ENCODE measurements at regions of chr9 and their contacts with region 1.

Region 1: GRCh38 chr9:129333953-129334724 is 156.1 kb upstream of the IER5L start:
- DNase-seq: peak; percentile 97
- H3K4me3 ChIP-seq: peak overlapping the region; percentile 31 to 41 (median 37)
- H3K27ac ChIP-seq: peak overlapping the region; percentile 88
- H3K4me1 ChIP-seq: peaks cover 48% of the 10 kb centered on the region
- H3K27me3 ChIP-seq: no peaks in the 10 kb centered on the region
- CTCF ChIP-seq: no peak

Region 2: DNA sequence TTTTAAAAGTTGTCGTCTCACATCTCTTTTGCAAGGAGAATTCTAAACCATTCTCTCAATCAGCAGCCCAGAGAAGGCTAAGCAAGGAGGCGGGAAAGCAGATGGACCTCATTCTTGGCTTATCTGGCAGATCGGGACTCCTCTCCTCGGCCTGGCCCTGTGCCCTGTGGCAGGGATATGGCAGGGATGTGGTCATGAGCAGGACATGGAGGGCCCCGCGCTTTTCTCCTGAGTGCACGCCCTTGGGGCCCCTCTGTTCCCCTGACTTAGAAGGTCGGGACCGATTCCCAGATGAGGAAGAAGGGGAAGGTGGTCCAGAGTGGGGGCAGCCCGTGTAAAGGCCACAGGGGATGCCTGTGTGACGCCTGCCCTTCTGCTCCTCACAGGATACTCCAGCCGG is 286.1 kb before region 1 on chr9:
- CTCF ChIA-PET with region 1: no interaction called
- dilution Hi-C with region 1: loop called (anchors 5 kb)
- in situ Hi-C with region 1: no loop called
- intact Hi-C with region 1: no loop called
- DNase-seq: no peak
- H3K4me3 ChIP-seq: no peak overlapping the region
- H3K27ac ChIP-seq: no peak overlapping the region
- H3K4me1 ChIP-seq: peaks cover 4% of the 10 kb centered on the region
- H3K27me3 ChIP-seq: no peaks in the 10 kb centered on the region
- CTCF ChIP-seq: no peak

Region 3: GRCh38 chr9:129258124-129258822 is 75.9 kb before region 1 on chr9:
- CTCF ChIA-PET with region 1: no interaction called
- dilution Hi-C with region 1: loop called (anchors 5 kb)
- in situ Hi-C with region 1: no loop called
- intact Hi-C with region 1: loop called (anchors 5 kb)
- DNase-seq: peak; percentile 85
- H3K4me3 ChIP-seq: peak overlapping the region; percentile 19 to 29 (median 28)
- H3K27ac ChIP-seq: no peak overlapping the region
- H3K4me1 ChIP-seq: peaks cover 15% of the 10 kb centered on the region
- H3K27me3 ChIP-seq: no peaks in the 10 kb centered on the region
- CTCF ChIP-seq: no peak

Region 4: DNA sequence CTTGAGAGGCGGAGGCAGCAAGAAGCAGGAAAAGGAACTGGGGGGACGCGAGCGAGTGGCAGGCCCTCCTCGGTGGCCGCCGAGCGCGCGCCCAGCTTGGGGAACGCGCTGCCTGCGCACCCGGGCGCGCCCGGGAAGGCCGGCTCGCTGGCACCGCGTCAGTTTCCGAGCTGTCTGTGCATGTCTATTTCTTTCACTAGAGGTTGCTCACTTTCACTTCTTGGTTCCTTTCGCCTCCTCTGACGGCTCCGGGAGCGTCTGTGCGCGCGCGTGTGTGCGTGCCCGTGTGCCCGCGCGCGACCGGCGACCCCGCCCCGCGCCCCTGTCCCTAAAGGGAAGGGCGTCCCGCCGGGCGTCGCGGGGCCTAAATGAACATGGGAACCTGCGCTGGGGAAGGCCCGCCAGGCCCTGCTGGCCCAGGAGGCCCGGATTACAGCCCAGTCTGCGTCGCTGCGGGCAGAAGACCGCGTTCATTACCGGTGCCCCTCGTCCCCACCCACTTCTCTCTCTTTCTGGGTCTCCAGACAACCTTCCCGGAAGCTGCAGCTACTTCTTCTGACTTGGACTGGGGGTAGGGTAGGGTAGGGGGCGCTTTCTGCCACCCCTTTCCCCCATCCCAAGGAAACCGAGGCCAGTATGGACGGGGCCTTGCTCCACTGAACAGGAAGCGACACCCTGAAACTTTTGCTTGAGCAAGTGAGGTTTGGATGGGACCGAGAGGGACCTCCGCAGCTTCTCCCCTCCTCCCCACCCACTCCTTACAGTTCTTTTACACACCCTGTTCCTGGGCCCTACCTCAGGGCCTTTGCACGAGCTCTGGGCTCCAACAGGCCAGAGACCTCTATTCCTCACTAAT is 49.6 kb after region 1 on chr9:
- CTCF ChIA-PET with region 1: no interaction called
- dilution Hi-C with region 1: no loop called
- in situ Hi-C with region 1: no loop called
- intact Hi-C with region 1: loop called (anchors 5 kb)
- DNase-seq: peak; percentile 73
- H3K4me3 ChIP-seq: peak overlapping the region; percentile 37 to 58 (median 45)
- H3K27ac ChIP-seq: no peak overlapping the region
- H3K4me1 ChIP-seq: peaks cover 16% of the 10 kb centered on the region
- H3K27me3 ChIP-seq: no peaks in the 10 kb centered on the region
- CTCF ChIP-seq: peak in 1 of 2 donors; percentile 31

Region 5: DNA sequence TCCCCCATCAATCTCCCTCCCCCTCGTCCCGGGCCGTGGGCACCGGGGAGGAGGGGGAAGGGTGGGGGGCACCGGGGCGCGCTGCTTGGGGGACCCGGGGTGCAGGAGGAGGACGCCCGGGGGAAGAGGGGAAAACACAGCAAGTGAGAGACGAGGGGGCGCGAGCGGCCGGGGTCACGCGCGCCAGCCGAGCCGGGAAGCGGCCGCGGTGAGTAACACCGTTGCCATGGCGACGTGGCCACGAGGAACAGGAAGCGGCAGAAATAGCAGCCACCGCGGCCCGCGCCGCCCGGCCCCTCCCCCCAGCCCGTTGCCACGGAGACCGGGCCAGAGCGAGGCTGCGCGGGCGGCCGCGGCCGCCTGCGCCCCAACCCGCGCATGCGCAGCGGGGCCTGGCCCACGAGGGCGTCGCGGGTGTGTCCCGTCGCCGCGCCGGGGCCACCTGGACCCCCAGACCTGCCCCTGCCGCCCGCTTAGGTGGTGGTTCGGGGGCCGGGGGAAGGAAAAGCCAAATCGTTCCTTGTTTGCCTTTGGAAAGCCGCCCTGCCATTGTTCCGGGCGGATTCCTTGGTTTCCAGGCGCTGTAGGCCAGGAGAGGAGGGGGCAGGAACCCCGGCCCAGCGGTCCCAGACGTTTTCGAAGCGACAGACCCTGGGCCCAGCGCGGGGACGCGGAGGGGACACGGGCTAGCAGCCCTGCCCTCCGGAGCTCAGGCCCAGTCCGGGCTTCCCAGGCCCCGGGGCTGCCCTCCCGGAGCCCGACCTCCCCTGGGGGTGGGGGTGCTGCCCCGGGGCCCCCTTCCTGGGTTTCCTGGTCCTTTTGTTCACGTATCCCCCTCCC is 79.6 kb after region 1 on chr9:
- CTCF ChIA-PET with region 1: no interaction called
- dilution Hi-C with region 1: no loop called
- in situ Hi-C with region 1: no loop called
- intact Hi-C with region 1: loop called (anchors 2 kb)
- DNase-seq: peak; percentile 89
- H3K4me3 ChIP-seq: peak overlapping the region; percentile 59 to 66 (median 59)
- H3K27ac ChIP-seq: peak overlapping the region; percentile 97
- H3K4me1 ChIP-seq: peaks cover 16% of the 10 kb centered on the region
- H3K27me3 ChIP-seq: no peaks in the 10 kb centered on the region
- CTCF ChIP-seq: no peak

Region 6: GRCh38 chr9:129487642-129488409 is 153.7 kb after region 1 on chr9:
- CTCF ChIA-PET with region 1: no interaction called
- dilution Hi-C with region 1: no loop called
- in situ Hi-C with region 1: loop called in 1 of 2 experiments (anchors 5 kb)
- intact Hi-C with region 1: loop called (anchors 2 kb)
- DNase-seq: peak; percentile 50
- H3K4me3 ChIP-seq: peak overlapping the region in 1 of 3 experiments; percentile 29
- H3K27ac ChIP-seq: peak overlapping the region; percentile 38
- H3K4me1 ChIP-seq: peaks cover 48% of the 10 kb centered on the region
- H3K27me3 ChIP-seq: no peaks in the 10 kb centered on the region
- CTCF ChIP-seq: no peak